ENCODE measurements at regions of chr2 and their contacts with region 1.

Region 1: GRCh38 chr2:173210270-173211196 is 134.9 kb downstream of the MAP3K20 start:
- DNase-seq: peak; percentile 69
- ATAC-seq: peak; percentile 94
- H3K4me3 Mint-ChIP-seq: no peak overlapping the region
- H3K27ac Mint-ChIP-seq: no peak overlapping the region
- H3K4me1 Mint-ChIP-seq: peaks cover 4% of the 10 kb centered on the region
- H3K27me3 Mint-ChIP-seq: peaks cover 2% of the 10 kb centered on the region
- CTCF ChIP-seq: peak; percentile 89

Region 2: DNA sequence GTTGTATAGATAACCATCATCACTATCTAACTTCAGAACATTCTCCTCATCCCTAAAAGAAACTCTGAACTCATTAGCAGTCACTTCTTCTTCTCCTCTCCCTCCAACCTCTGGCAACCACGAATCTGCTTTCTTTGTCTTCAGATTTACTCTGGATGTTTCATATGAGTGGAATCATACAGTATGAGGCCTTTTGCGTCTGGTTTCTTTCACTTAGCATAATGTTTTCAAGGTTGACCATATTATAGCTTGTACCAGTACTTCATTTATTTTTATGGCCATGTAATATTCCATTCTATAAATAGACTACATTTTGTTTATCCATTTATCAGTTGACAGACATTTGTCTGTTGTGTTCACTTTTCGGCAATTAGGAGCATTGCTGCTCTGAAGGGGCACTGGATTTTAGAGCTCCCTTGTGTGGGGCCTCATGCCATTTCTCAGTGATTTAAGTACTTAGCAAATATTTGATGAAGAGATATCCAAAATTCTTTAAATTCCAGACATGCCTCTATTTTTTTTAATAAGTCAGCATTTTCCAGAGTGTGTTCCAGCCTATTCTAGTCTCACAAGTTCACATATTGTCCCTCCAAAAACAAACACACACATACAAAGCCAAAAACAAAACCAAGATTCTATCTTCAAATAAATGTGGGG is 157.4 kb before region 1 on chr2:
- CTCF ChIA-PET with region 1: interaction called, 12 read pairs
- POLR2A ChIA-PET with region 1: no interaction called
- intact Hi-C with region 1: no loop called
- DNase-seq: no peak
- ATAC-seq: no peak
- H3K4me3 Mint-ChIP-seq: no peak overlapping the region
- H3K27ac Mint-ChIP-seq: no peak overlapping the region
- H3K4me1 Mint-ChIP-seq: peaks cover 10% of the 10 kb centered on the region
- H3K27me3 Mint-ChIP-seq: peaks cover 18% of the 10 kb centered on the region
- CTCF ChIP-seq: no peak

Region 3: GRCh38 chr2:173059927-173060565 is 150.5 kb before region 1 on chr2:
- CTCF ChIA-PET with region 1: interaction called, 16 read pairs
- POLR2A ChIA-PET with region 1: no interaction called
- intact Hi-C with region 1: no loop called
- DNase-seq: no peak
- ATAC-seq: no peak
- H3K4me3 Mint-ChIP-seq: no peak overlapping the region
- H3K27ac Mint-ChIP-seq: no peak overlapping the region
- H3K4me1 Mint-ChIP-seq: no peaks in the 10 kb centered on the region
- H3K27me3 Mint-ChIP-seq: peaks cover 16% of the 10 kb centered on the region
- CTCF ChIP-seq: no peak

Region 4: GRCh38 chr2:173075781-173076580 is 134.6 kb before region 1 on chr2 and contains the start of gene MAP3K20:
- CTCF ChIA-PET with region 1: interaction called, 19 read pairs
- POLR2A ChIA-PET with region 1: no interaction called
- intact Hi-C with region 1: no loop called
- DNase-seq: peak; percentile 65
- ATAC-seq: peak; percentile 80
- H3K4me3 Mint-ChIP-seq: peak within 1 kb of the TSS; percentile 77
- H3K27ac Mint-ChIP-seq: peak within 1 kb of the TSS; percentile 72
- H3K4me1 Mint-ChIP-seq: peaks cover 14% of the 10 kb centered on the region
- H3K27me3 Mint-ChIP-seq: peaks cover 42% of the 10 kb centered on the region
- CTCF ChIP-seq: no peak
- total RNA-seq, gene MAP3K20: 8.0 to 10.2 TPM

Region 5: GRCh38 chr2:173090276-173090877 is 120.2 kb before region 1 on chr2:
- CTCF ChIA-PET with region 1: interaction called, 18 read pairs
- POLR2A ChIA-PET with region 1: no interaction called
- intact Hi-C with region 1: loop called (anchors 10 kb)
- DNase-seq: no peak
- ATAC-seq: no peak
- H3K4me3 Mint-ChIP-seq: no peak overlapping the region
- H3K27ac Mint-ChIP-seq: no peak overlapping the region
- H3K4me1 Mint-ChIP-seq: no peaks in the 10 kb centered on the region
- H3K27me3 Mint-ChIP-seq: peaks cover 6% of the 10 kb centered on the region
- CTCF ChIP-seq: no peak

Region 6: DNA sequence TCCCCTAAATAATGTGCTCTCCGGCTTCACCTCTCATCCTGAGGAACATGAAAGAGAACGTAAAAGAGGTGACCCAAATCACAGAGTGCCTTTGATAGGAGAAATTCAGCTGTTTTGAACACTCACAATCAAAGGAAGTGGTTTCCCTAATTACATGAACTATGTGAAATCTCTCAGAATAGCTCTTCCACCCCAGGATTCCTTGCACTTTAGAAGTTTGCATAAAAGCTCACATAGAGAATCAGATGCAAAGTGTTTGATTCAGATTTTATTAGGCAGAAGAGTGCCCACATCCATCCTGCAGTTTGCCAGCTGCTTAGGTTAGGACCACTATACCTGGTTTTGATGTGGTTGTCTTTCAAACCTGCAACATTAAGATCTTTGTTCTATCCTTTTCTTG is 73.9 kb before region 1 on chr2:
- CTCF ChIA-PET with region 1: interaction called, 10 read pairs
- POLR2A ChIA-PET with region 1: interaction called, 4 read pairs
- intact Hi-C with region 1: no loop called
- DNase-seq: no peak
- ATAC-seq: no peak
- H3K4me3 Mint-ChIP-seq: no peak overlapping the region
- H3K27ac Mint-ChIP-seq: no peak overlapping the region
- H3K4me1 Mint-ChIP-seq: peaks cover 52% of the 10 kb centered on the region
- H3K27me3 Mint-ChIP-seq: peaks cover 36% of the 10 kb centered on the region
- CTCF ChIP-seq: no peak

Region 7: GRCh38 chr2:173199294-173199693 is 11.2 kb before region 1 on chr2:
- CTCF ChIA-PET with region 1: interaction called, 15 read pairs
- POLR2A ChIA-PET with region 1: no interaction called
- intact Hi-C with region 1: no loop called
- DNase-seq: no peak
- ATAC-seq: no peak
- H3K4me3 Mint-ChIP-seq: no peak overlapping the region
- H3K27ac Mint-ChIP-seq: no peak overlapping the region
- H3K4me1 Mint-ChIP-seq: no peaks in the 10 kb centered on the region
- H3K27me3 Mint-ChIP-seq: peaks cover 2% of the 10 kb centered on the region
- CTCF ChIP-seq: no peak

Measured in activated CD8-positive, alpha-beta T cell treated with anti-CD3 and anti-CD28 coated beads for 36 hours (primary cell).